Caco-2 (cell line): ENCODE measurements at regions of chr16 and their contacts with region 1.

Region 1: GRCh38 chr16:10362077-10362863 is 23.6 kb upstream of the ATF7IP2 start:
- DNase-seq: peak; percentile 71 to 82
- H3K4me3 ChIP-seq: no peak overlapping the region
- H3K4me3 Mint-ChIP-seq: no peak overlapping the region
- H3K27ac Mint-ChIP-seq: no peak overlapping the region
- H3K4me1 ChIP-seq: peaks cover 22% of the 10 kb centered on the region
- H3K4me1 Mint-ChIP-seq: no peaks in the 10 kb centered on the region
- H3K27me3 ChIP-seq: no peaks in the 10 kb centered on the region
- H3K27me3 Mint-ChIP-seq: no peaks in the 10 kb centered on the region
- CTCF ChIP-seq: no peak

Region 2: DNA sequence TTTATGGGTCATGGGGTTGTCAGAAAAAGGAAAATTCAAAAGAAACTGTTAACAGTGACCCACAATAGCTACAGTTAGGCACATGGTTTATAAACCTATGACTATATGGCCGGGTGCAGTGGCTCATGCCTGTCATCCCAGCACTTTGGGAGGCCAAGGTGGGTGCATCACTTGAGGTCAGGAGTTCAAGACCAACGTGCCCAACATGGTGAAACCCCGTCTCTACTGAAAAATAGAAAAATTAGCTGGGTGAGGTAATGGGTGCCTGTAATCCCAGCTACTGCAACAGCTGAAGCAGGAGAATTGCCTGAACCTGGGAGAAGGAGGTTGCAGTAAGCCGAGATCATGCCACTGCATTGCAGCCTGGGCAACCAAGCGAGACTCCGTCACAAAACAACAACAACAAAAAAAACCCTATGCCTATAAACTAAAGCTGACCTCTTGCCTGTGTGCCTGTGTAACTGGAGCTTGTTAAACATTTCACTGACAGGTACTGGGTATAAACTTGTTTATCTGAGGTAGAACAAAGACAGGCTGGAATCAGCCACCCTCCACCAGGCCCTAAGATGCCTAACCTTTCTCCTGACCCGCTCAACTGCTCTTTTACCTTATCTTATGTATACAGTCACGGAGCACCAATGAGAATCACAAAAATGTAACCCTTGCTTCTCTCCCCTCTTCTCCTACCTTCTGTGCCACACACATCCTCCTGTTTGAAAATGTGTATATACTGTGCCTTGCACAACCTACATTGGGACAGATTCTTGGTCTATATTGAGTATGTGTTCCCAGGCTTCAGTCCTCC is 39.3 kb before region 1 on chr16:
- CTCF ChIA-PET with region 1: no interaction called
- POLR2A ChIA-PET with region 1: no interaction called
- intact Hi-C with region 1: loop called (anchors 5 kb)
- DNase-seq: peak; percentile 67 to 85
- H3K4me3 ChIP-seq: no peak overlapping the region
- H3K4me3 Mint-ChIP-seq: peak overlapping the region; percentile 4
- H3K27ac Mint-ChIP-seq: peak overlapping the region; percentile 60
- H3K4me1 ChIP-seq: peaks cover 42% of the 10 kb centered on the region
- H3K4me1 Mint-ChIP-seq: peaks cover 28% of the 10 kb centered on the region
- H3K27me3 ChIP-seq: no peaks in the 10 kb centered on the region
- H3K27me3 Mint-ChIP-seq: no peaks in the 10 kb centered on the region
- CTCF ChIP-seq: no peak

Region 3: GRCh38 chr16:10332241-10332640 is 30.0 kb before region 1 on chr16:
- CTCF ChIA-PET with region 1: no interaction called
- POLR2A ChIA-PET with region 1: interaction called, 4 read pairs
- intact Hi-C with region 1: loop called (anchors 2 kb)
- DNase-seq: peak; percentile 82 to 91
- H3K4me3 ChIP-seq: no peak overlapping the region
- H3K4me3 Mint-ChIP-seq: no peak overlapping the region
- H3K27ac Mint-ChIP-seq: peak overlapping the region; percentile 66
- H3K4me1 ChIP-seq: peaks cover 41% of the 10 kb centered on the region
- H3K4me1 Mint-ChIP-seq: no peaks in the 10 kb centered on the region
- H3K27me3 ChIP-seq: no peaks in the 10 kb centered on the region
- H3K27me3 Mint-ChIP-seq: no peaks in the 10 kb centered on the region
- CTCF ChIP-seq: no peak

Region 4: GRCh38 chr16:10447289-10447688 is 85.0 kb after region 1 on chr16:
- CTCF ChIA-PET with region 1: no interaction called
- POLR2A ChIA-PET with region 1: no interaction called
- intact Hi-C with region 1: no loop called
- DNase-seq: no peak
- H3K4me3 ChIP-seq: no peak overlapping the region
- H3K4me3 Mint-ChIP-seq: no peak overlapping the region
- H3K27ac Mint-ChIP-seq: no peak overlapping the region
- H3K4me1 ChIP-seq: no peaks in the 10 kb centered on the region
- H3K4me1 Mint-ChIP-seq: no peaks in the 10 kb centered on the region
- H3K27me3 ChIP-seq: no peaks in the 10 kb centered on the region
- H3K27me3 Mint-ChIP-seq: no peaks in the 10 kb centered on the region
- CTCF ChIP-seq: no peak